ENCODE measurements at regions of chr20 and their contacts with region 1.

Region 1: GRCh38 chr20:51966291-51966971 is 164.1 kb upstream of the SALL4 start:
- DNase-seq: no peak
- H3K4me3 ChIP-seq: no peak overlapping the region
- H3K27ac ChIP-seq: no peak overlapping the region
- H3K4me1 ChIP-seq: no peaks in the 10 kb centered on the region
- H3K27me3 ChIP-seq: no peaks in the 10 kb centered on the region
- CTCF ChIP-seq: peak; percentile 19 to 56 (median 38)

Region 2: DNA sequence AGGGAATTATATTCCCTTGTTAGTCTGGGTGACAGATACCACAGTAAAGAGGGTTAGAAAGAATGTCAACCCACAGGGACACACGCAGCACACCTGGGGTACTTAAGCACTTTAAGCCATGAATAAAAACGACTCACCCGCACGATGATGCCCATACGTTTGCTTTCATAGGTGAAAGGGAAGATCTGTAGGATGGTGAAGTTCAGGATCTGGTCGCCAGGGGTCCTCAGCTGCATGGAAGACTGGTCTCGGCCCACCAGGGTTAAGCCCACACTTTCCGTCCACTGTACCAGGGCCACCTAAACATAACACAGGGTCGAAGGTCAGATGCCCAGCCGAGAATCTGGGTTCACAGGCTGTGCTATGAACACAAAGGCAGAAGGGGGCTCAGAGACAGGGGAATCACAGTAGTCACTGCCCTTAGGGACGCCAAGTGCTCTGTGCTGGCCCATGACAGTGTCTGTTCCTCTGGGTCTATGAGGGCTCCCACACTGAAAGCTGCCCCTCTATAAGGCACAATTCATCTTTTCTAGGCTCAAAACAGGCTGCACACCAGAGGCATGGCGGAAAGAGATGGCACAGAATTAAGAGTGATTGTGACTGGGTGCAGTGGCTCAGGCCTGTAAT is 327.1 kb before region 1 on chr20:
- intact Hi-C with region 1: loop called (anchors 5 kb)
- DNase-seq: peak in 1 of 2 donors; percentile 71
- H3K4me3 ChIP-seq: no peak overlapping the region
- H3K27ac ChIP-seq: no peak overlapping the region
- H3K4me1 ChIP-seq: no peaks in the 10 kb centered on the region
- H3K27me3 ChIP-seq: no peaks in the 10 kb centered on the region
- CTCF ChIP-seq: peak; percentile 67 to 84 (median 75)

Measured in ascending aorta (tissue), 2 donors.